ENCODE measurements at regions of chr9 and their contacts with region 1.

Region 1: GRCh38 chr9:108565651-108566378 is 290.0 kb downstream of the ACTL7B start:
- DNase-seq: peak; percentile 88
- ATAC-seq: peak; percentile 94
- H3K4me3 ChIP-seq: no peak overlapping the region
- H3K27ac ChIP-seq: no peak overlapping the region
- H3K4me1 ChIP-seq: no peaks in the 10 kb centered on the region; the same call in 1 of the 2 replicates
- H3K27me3 ChIP-seq: no peaks in the 10 kb centered on the region
- CTCF ChIP-seq: peak; percentile 96
- POLR2A ChIP-seq: peak; percentile 69
- RAD21 ChIP-seq: peak; percentile 99

Region 2: GRCh38 chr9:107478805-107479204 is 1087.0 kb before region 1 on chr9:
- CTCF ChIA-PET with region 1: no interaction called
- POLR2A ChIA-PET with region 1: no interaction called
- dilution Hi-C with region 1: no loop called
- in situ Hi-C with region 1: loop called (anchors 5 kb)
- intact Hi-C with region 1: loop called (anchors 1 kb)
- DNase-seq: no peak
- ATAC-seq: no peak
- H3K4me3 ChIP-seq: no peak overlapping the region
- H3K27ac ChIP-seq: no peak overlapping the region
- H3K4me1 ChIP-seq: peaks cover 2% of the 10 kb centered on the region
- H3K27me3 ChIP-seq: no peaks in the 10 kb centered on the region
- CTCF ChIP-seq: no peak
- POLR2A ChIP-seq: no peak
- RAD21 ChIP-seq: no peak

Region 3: DNA sequence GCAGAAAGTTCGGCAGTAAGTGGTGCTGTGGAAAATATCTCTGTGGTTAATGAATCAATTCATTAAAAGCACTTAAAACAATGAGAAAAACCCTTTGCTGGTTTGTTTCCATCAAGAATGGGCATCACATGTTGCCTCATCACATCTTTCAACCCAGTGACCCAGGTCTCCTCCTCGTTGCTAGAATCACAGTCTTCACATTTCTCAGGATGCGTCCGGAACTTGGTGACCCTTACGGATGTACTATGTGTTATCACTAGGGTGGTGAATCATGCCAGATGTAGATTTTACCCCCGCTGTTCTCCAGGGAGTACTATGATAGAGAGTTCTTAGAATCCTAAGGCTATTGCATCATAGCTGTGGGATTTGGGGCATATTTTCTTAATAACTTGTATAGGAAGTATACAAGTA is 858.4 kb before region 1 on chr9:
- CTCF ChIA-PET with region 1: no interaction called
- POLR2A ChIA-PET with region 1: no interaction called
- dilution Hi-C with region 1: no loop called
- in situ Hi-C with region 1: no loop called
- intact Hi-C with region 1: loop called (anchors 10 kb)
- DNase-seq: peak; percentile 97
- ATAC-seq: peak; percentile 89
- H3K4me3 ChIP-seq: no peak overlapping the region
- H3K27ac ChIP-seq: peak overlapping the region; percentile 8; the same call in 1 of the 2 replicates
- H3K4me1 ChIP-seq: peaks cover 9% of the 10 kb centered on the region
- H3K27me3 ChIP-seq: no peaks in the 10 kb centered on the region; the same call in 1 of the 2 replicates
- CTCF ChIP-seq: no peak
- POLR2A ChIP-seq: no peak
- RAD21 ChIP-seq: no peak; the same call in 1 of the 2 replicates

Region 4: DNA sequence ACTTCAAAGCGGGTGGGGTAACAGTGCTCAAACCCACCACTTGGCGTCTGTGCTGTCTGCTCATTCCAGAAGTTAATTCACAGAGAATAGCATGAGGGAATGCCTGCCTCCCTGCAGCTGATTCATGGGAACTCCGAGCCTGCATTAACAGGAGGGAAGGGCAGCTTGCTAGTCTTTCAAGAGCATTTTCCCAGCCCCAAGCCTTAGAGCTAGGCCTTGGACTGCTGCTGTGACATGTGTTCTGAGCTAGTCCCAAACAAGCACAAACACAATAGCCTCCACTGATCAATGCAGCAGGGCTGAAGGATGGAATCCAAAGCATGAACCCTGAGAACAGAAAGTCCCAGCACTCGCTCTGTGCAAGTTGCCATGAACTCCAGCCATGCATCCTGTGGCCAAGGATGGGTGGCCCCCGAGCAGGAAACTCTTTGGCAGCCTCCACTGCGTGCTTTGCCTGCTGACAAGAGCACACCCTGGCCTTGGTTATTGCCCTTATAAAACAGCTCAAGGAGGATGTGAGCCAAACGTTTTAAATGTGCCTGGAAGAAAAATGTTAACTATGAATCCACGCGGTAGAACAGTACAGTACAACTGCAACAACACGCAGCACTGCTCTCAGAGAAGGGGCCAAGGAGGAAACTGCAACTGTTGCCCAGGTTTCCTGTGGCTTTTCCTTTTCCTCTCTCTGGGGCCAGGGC is 423.2 kb before region 1 on chr9:
- CTCF ChIA-PET with region 1: no interaction called
- POLR2A ChIA-PET with region 1: no interaction called
- dilution Hi-C with region 1: no loop called
- in situ Hi-C with region 1: no loop called
- intact Hi-C with region 1: loop called (anchors 5 kb)
- DNase-seq: peak; percentile 50
- ATAC-seq: peak; percentile 92
- H3K4me3 ChIP-seq: no peak overlapping the region
- H3K27ac ChIP-seq: peak overlapping the region; percentile 54; the same call in 1 of the 2 replicates
- H3K4me1 ChIP-seq: peaks cover 7% of the 10 kb centered on the region; the same call in 1 of the 2 replicates
- H3K27me3 ChIP-seq: no peaks in the 10 kb centered on the region
- CTCF ChIP-seq: no peak
- POLR2A ChIP-seq: no peak
- RAD21 ChIP-seq: no peak

Region 5: DNA sequence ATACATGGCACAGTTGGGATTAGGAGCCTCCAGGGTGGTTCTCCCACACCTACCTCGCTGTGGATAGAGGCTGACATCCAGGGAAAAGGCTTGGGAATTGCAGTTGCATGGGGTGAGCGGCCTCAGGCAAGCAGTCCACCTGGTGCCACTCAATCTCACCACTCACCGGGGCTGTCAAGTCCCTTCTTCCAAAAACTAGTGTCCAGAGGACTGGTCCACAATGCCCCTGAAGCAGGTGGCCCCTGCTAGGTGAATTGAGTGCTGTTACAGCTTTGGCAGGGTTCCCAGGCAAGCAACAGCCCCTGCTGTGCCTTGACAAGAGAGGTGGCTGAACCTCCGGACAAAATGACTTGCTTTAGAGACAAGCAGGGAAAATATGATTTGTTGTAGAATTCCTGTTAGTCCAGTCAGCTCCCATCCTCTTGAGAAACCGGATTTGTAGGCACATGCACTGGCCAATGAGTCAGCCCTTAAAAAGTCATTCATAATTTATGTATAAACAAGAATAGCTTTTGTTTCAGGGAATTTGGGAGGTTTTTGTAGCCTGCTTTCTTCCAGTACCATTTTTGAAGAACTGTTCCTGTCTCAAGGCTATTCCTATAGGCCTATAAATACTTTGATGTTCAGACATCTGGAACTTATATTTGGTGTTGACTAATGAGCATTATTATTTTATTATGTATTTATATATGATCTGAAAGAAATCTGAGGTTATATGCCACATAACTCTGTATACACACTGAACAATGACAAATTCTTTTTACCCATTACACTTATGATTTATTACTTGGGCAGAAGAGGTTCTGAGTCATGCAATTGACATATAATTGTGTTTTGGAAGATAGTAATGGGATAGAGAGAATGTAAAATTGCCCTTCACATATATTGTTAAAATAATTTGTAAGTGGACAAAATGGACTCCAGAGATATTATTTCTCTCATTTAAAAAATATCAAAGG is 121.1 kb before region 1 on chr9:
- CTCF ChIA-PET with region 1: interaction called, 3 read pairs
- POLR2A ChIA-PET with region 1: no interaction called
- dilution Hi-C with region 1: no loop called
- in situ Hi-C with region 1: no loop called
- intact Hi-C with region 1: loop called (anchors 2 kb)
- DNase-seq: peak; percentile 96
- ATAC-seq: peak; percentile 60
- H3K4me3 ChIP-seq: peak overlapping the region; percentile 30
- H3K27ac ChIP-seq: peak overlapping the region; percentile 96
- H3K4me1 ChIP-seq: peaks cover 19% of the 10 kb centered on the region
- H3K27me3 ChIP-seq: no peaks in the 10 kb centered on the region
- CTCF ChIP-seq: no peak
- POLR2A ChIP-seq: no peak
- RAD21 ChIP-seq: no peak

Region 6: GRCh38 chr9:108534741-108535140 is 31.1 kb before region 1 on chr9:
- CTCF ChIA-PET with region 1: no interaction called
- POLR2A ChIA-PET with region 1: no interaction called
- dilution Hi-C with region 1: no loop called
- in situ Hi-C with region 1: no loop called
- intact Hi-C with region 1: no loop called
- DNase-seq: peak; percentile 88
- ATAC-seq: peak; percentile 94
- H3K4me3 ChIP-seq: no peak overlapping the region
- H3K27ac ChIP-seq: peak overlapping the region; percentile 63
- H3K4me1 ChIP-seq: peaks cover 10% of the 10 kb centered on the region
- H3K27me3 ChIP-seq: no peaks in the 10 kb centered on the region
- CTCF ChIP-seq: no peak
- POLR2A ChIP-seq: no peak
- RAD21 ChIP-seq: peak; percentile 20; the same call in 1 of the 2 replicates

Region 7: DNA sequence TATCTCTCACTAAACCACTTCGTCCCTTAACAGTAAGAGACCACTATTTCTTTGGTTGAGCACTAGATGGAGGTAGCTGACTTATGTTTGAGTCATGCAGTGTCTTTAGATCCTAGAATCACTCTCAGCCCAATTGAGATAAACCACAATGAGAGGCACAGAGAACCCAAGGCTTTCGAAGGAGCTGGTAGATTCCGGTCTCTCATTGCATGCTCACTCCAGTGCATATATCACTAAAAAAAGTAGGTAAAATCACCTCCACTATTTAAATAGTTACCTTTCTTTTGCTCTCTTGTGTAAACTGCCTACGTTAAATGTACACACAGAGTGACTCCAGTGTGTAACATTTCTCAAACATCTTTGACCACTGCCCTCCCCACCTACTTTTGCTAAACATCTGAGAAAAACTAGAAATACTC is 323.8 kb after region 1 on chr9:
- CTCF ChIA-PET with region 1: no interaction called
- POLR2A ChIA-PET with region 1: no interaction called
- dilution Hi-C with region 1: no loop called
- in situ Hi-C with region 1: no loop called
- intact Hi-C with region 1: no loop called
- DNase-seq: peak; percentile 67
- ATAC-seq: peak; percentile 82
- H3K4me3 ChIP-seq: no peak overlapping the region
- H3K27ac ChIP-seq: no peak overlapping the region
- H3K4me1 ChIP-seq: peaks cover 2% of the 10 kb centered on the region; the same call in 1 of the 2 replicates
- H3K27me3 ChIP-seq: no peaks in the 10 kb centered on the region
- CTCF ChIP-seq: peak; percentile 44
- POLR2A ChIP-seq: no peak
- RAD21 ChIP-seq: peak; percentile 59

Measured in IMR-90 (cell line).